Natural killer cell (primary cell): ENCODE measurements at regions of chrX and their contacts with region 1.

Region 1: GRCh38 chrX:150683536-150684146 is 9.6 kb upstream of the MTMR1 start:
- DNase-seq: peak in 1 of 2 donors; percentile 79
- ATAC-seq: peak in 1 of 3 donors; percentile 65
- H3K4me3 ChIP-seq: no peak overlapping the region
- H3K4me3 Mint-ChIP-seq: no peak overlapping the region
- H3K27ac ChIP-seq: no peak overlapping the region
- H3K27ac Mint-ChIP-seq: no peak overlapping the region
- H3K4me1 ChIP-seq: peaks cover 1% of the 10 kb centered on the region
- H3K4me1 Mint-ChIP-seq: peaks cover 0 to 4% of the 10 kb centered on the region in 2 donors
- H3K27me3 ChIP-seq: no peaks in the 10 kb centered on the region
- H3K27me3 Mint-ChIP-seq: peaks cover 0 to 8% of the 10 kb centered on the region in 2 donors
- CTCF ChIP-seq: peak; percentile 52

Region 2: GRCh38 chrX:150715184-150715583 is 31.5 kb after region 1 on chrX:
- intact Hi-C with region 1: loop called (anchors 1 kb)
- DNase-seq: no peak
- ATAC-seq: no peak
- H3K4me3 ChIP-seq: no peak overlapping the region
- H3K4me3 Mint-ChIP-seq: no peak overlapping the region
- H3K27ac ChIP-seq: no peak overlapping the region
- H3K27ac Mint-ChIP-seq: peak overlapping the region in 1 of 2 donors; percentile 53
- H3K4me1 ChIP-seq: no peaks in the 10 kb centered on the region
- H3K4me1 Mint-ChIP-seq: peaks cover 0 to 5% of the 10 kb centered on the region in 2 donors
- H3K27me3 ChIP-seq: no peaks in the 10 kb centered on the region
- H3K27me3 Mint-ChIP-seq: no peaks in the 10 kb centered on the region
- CTCF ChIP-seq: no peak

Region 3: DNA sequence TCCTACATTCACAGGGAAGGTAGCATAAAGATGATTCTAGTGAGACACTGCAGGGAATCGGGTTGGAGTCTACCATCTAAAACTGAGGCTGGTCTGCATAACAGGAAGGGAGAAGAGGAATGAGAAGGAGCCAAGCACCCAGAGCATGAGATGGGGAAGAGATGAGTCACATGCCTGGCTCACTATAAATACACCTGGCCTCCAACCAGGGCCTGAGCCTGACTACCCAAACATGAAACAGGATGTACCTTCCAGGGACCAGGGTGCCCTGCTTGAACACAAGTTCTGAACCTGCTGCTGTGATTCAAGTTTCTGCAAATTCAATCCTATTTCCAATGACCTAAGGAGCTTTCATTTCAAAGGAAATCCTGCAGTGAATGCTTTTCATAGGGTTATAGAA is 190.0 kb after region 1 on chrX:
- intact Hi-C with region 1: no loop called
- DNase-seq: no peak
- ATAC-seq: no peak
- H3K4me3 ChIP-seq: no peak overlapping the region
- H3K4me3 Mint-ChIP-seq: no peak overlapping the region
- H3K27ac ChIP-seq: no peak overlapping the region
- H3K27ac Mint-ChIP-seq: no peak overlapping the region
- H3K4me1 ChIP-seq: no peaks in the 10 kb centered on the region
- H3K4me1 Mint-ChIP-seq: peaks cover 0 to 30% of the 10 kb centered on the region in 2 donors
- H3K27me3 ChIP-seq: no peaks in the 10 kb centered on the region
- H3K27me3 Mint-ChIP-seq: no peaks in the 10 kb centered on the region
- CTCF ChIP-seq: no peak